ENCODE measurements at regions of chr19 and their contacts with region 1.

Region 1: DNA sequence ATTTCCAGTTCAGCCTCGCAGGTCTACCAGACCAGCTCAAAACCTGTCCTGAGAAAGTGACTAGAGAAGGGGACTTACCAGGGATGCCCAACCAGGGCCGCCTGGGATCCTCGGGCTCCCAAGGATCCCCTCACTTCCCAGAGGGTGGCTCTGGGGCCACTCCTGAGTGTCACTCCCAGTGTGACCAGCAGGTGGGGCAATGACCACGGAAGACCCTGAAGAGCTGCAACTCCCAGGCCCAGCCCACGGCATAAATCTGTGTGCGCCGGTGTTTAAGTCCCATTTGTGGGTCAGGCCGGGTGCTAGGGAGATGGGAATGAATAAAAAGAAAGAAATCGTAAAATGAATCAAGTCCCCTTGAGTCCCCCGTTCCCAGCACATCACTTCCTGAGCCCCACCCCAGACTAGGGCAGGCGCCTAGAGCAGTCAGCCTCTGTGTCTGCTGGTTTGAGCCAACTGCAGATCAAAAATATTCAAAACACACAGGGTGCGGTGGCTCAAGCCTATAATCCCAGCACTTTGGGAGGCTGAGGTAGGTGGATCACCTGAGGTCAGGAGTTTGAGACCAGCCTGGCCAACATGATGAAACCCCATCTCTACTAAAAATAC is 10.7 kb downstream of the PTGIR start:
- DNase-seq: peak; percentile 71 to 83 (median 78)
- H3K4me3 ChIP-seq: no peak overlapping the region
- H3K27ac ChIP-seq: no peak overlapping the region
- H3K4me1 ChIP-seq: peaks cover 0 to 56% (median 51%) of the 10 kb centered on the region in 4 experiments
- H3K27me3 ChIP-seq: no peaks in the 10 kb centered on the region

Region 2: DNA sequence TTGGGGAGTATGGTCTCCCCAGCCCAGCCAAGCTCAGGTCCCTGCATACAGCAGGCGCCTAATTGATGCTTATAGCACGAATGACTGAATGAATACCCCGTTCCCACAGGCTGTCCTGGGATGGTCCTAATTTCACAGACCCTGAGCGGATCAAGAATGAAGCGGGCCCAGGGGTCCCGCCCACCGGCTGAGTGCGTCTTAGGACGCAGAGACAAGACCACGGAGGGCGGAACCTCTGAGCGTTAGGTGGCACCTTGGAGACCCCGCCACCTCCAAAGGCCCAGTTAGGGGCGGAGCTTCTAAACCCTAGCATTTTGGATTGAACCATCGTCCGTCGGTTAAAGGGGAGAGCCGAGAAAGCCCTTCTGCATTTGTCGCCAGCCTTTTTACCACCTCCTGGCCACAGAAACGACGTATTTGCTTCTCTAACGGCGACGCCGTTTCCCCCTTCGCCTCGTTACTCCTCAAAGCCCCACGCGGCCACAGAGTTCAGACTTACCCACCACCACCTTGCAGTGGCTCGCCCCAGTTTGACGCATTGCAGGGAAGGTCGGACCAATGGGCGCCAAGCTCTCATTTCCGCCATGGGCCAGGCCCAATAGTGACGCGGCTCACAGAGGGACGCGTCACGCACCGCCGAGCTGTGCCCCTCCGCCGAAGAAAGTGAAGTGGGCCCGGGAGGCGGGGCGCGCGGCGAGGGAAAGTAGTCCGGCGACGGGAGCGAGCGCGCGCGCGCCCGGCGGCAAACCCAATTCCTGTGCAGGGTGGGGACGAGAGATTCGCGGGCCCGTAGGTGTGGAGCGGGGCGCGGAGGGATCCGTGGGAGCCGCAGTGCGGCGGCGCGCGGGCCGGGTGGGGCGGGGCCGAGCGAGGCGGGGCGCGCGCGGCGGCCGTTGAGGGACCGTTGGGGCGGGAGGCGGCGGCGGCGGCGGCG is 13.6 kb before region 1 on chr19:
- CTCF ChIA-PET with region 1: interaction called, 14 read pairs
- POLR2A ChIA-PET with region 1: interaction called, 9 read pairs
- DNase-seq: peak; percentile 98 to 99 (median 99)
- H3K4me3 ChIP-seq: peak overlapping the region; percentile 58 to 100 (median 95)
- H3K27ac ChIP-seq: peak overlapping the region; percentile 100
- H3K4me1 ChIP-seq: peaks cover 0 to 29% (median 28%) of the 10 kb centered on the region in 4 experiments
- H3K27me3 ChIP-seq: no peaks in the 10 kb centered on the region

Region 3: DNA sequence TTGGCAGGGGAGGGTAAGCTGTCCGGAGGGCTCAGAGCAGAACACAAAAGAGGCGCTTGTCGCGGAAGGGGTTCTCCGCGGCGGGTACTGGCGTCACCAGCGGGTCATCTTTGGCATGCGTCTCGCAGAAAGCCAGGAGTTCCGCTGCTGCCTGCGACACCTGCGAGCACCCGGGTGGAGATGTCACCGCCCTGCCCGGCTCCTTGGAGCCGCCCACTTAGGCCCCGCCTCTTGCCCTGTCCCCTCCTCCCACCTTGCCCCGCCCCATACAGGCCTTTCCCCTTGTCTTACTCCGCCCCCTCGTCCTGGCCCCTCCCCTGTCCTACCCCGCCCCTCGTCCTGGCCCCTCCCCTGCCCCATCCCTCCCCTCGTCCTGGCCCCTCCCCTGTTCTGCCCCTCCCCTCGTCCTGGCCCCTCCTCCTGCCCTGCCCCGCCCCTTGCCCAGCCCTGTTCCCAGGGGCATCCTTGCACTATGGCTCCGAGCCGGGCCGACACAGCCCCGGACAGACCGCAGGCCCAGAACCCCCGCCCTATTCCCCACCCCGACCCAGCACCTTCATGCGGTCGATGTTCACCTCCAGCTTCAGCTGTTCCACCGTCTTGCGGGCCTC is 19.9 kb after region 1 on chr19:
- CTCF ChIA-PET with region 1: interaction called, 172 read pairs
- POLR2A ChIA-PET with region 1: interaction called, 3 read pairs
- DNase-seq: peak; percentile 85 to 92 (median 88)
- H3K4me3 ChIP-seq: peak overlapping the region in 5 of 7 experiments; percentile 37 to 76 (median 58)
- H3K27ac ChIP-seq: no peak overlapping the region
- H3K4me1 ChIP-seq: peaks cover 0 to 61% (median 49%) of the 10 kb centered on the region in 4 experiments
- H3K27me3 ChIP-seq: peaks cover 0 to 42% (median 9%) of the 10 kb centered on the region in 5 experiments

Measured in common myeloid progenitor, CD34-positive (primary cell).